Left lung (tissue), 14 donors: ENCODE measurements at regions of chr16 and their contacts with region 1.

Region 1: DNA sequence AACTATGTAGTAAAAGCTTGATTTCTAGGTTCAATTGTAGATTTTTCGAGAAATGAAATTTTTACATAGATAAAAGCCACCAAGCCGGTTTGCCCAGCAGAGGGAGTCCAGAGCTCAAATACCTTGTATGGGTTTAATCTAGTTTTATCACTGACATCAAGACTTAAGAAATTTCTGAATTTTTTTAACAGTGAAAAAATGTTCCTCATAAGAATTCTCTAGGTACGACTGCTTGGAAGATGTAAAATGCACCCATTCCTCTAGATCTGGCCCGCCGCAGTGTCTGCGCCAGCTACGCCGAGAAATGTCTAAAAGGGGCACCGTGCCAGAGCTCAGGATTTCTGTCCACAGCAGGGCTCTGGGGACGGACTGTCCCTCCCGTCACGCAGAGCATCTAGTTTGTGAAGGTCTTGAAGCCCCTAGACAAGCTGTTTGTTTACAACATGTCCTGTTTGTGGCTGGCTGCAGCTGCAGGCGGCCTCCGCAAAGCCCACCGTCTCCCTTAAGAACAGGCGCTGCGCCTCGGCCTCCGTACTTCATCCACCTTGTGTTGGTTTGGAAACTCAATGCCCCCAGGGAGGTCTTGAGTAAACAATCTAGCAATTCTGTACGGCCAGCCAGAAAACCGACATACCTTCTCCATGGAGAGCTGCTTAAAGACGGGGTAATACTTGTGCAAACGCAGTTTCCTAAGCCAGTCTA is 24.8 kb downstream of the MAP1LC3B start:
- DNase-seq: peak in 3 of 4 donors; percentile 13 to 59 (median 46)
- ATAC-seq: peak; percentile 34
- H3K4me3 ChIP-seq: no peak overlapping the region
- H3K27ac ChIP-seq: no peak overlapping the region
- H3K4me1 ChIP-seq: no peaks in the 10 kb centered on the region
- H3K27me3 ChIP-seq: no peaks in the 10 kb centered on the region
- CTCF ChIP-seq: peak; percentile 49 to 68

Region 2: DNA sequence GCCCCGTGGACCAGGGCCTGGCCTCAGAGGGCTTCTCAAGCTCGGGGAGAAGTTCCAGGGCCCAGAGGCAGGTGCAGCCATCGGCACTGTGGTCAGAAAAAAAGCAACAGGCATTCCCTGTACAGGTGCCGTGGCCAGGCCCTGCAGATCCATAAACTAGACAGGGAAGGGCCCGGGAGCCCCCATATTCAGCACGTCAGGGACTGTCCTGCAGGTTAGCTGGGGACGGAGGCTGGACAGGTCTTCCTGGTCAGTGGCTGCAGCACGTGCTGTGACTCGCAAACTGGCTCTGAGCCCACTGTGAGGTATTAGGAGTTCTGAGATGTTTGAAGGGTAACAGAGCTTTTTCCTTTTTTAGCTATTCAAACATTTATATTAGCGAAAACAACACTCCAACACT is 84.8 kb before region 1 on chr16:
- intact Hi-C with region 1: no loop called
- DNase-seq: no peak
- ATAC-seq: no peak
- H3K4me3 ChIP-seq: no peak overlapping the region
- H3K27ac ChIP-seq: no peak overlapping the region
- H3K4me1 ChIP-seq: no peaks in the 10 kb centered on the region
- H3K27me3 ChIP-seq: no peaks in the 10 kb centered on the region
- CTCF ChIP-seq: no peak

Region 3: DNA sequence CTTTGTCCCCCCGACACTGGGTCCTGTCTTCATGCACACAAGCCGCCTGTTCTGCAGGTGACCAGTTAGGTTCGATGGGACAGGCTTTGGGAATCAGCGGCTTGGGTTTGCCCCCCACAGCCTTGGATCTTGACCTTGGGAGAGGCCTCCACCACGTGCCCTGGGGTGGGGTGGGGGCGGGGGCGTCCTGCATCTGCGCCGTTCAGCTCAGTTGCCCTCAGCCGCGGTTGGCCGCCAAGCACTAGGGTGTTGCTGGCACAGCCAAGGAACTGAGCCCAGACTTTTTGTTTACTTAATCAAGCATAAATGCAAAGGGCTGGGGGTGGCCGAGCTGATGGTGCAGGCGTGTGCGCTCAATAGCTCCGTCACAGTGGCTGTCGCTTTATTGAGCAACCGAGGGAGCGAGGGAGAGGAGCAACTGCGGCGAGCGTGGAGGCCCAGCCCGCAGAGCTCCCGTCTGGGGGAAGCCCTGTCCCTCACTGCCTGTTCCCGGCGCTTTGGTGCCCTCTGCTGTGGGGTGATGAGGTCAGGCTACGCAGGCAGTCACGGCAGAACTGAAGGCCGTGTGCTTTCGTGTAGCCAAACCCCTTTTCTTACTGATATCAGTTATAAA is 219.2 kb after region 1 on chr16:
- intact Hi-C with region 1: loop called in 1 of 2 experiments (anchors 5 kb)
- DNase-seq: peak; percentile 59 to 90 (median 83)
- ATAC-seq: peak; percentile 98
- H3K4me3 ChIP-seq: no peak overlapping the region
- H3K27ac ChIP-seq: no peak overlapping the region
- H3K4me1 ChIP-seq: peaks cover 5 to 8% of the 10 kb centered on the region in 2 donors
- H3K27me3 ChIP-seq: peaks cover 0 to 80% of the 10 kb centered on the region in 2 donors
- CTCF ChIP-seq: peak; percentile 53 to 63